Activated CD4-positive, alpha-beta memory T cell treated with anti-CD3 and anti-CD28 coated beads for 36 hours (primary cell): ENCODE measurements at regions of chr2 and their contacts with region 1.

Region 1: GRCh38 chr2:144261336-144261735 is 258.6 kb downstream of the ZEB2 start:
- DNase-seq: no peak
- H3K4me3 Mint-ChIP-seq: no peak overlapping the region
- H3K27ac Mint-ChIP-seq: no peak overlapping the region
- H3K4me1 Mint-ChIP-seq: peaks cover 32% of the 10 kb centered on the region
- H3K27me3 Mint-ChIP-seq: no peaks in the 10 kb centered on the region

Region 2: GRCh38 chr2:144166743-144167142 is 94.6 kb before region 1 on chr2:
- CTCF ChIA-PET with region 1: no interaction called
- POLR2A ChIA-PET with region 1: no interaction called
- intact Hi-C with region 1: loop called (anchors 5 kb)
- DNase-seq: no peak
- H3K4me3 Mint-ChIP-seq: no peak overlapping the region
- H3K27ac Mint-ChIP-seq: no peak overlapping the region
- H3K4me1 Mint-ChIP-seq: no peaks in the 10 kb centered on the region
- H3K27me3 Mint-ChIP-seq: no peaks in the 10 kb centered on the region

Region 3: DNA sequence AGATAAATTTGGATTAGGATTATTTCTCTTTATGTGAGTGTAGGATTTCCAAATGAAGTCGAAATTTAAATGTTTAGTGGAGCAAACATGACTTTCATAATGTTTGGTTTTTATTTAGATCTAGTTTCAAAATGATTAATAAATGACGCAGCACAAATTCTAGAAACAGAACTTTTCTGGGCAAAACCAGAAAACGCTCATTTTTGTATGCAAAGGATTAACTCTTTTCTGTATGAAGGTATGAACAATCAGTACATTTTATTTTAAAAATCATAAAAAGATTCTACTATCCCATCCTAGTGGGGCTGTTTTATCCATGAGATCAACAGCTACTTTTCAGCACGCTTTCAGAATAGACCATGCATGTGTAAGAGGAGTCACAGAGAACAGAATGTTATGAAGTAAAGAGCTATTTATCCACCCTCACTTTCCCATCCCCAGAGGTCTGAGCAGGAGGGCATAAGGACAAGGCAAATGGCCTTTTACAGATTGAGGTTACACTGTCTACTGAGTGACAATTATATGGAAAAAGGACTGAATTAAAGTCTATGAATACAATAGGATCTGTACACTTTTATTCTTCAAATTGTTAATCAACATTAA is 12.2 kb before region 1 on chr2:
- CTCF ChIA-PET with region 1: no interaction called
- POLR2A ChIA-PET with region 1: interaction called, 3 read pairs
- intact Hi-C with region 1: loop called (anchors 2 kb)
- DNase-seq: no peak
- H3K4me3 Mint-ChIP-seq: no peak overlapping the region
- H3K27ac Mint-ChIP-seq: peak overlapping the region; percentile 74
- H3K4me1 Mint-ChIP-seq: peaks cover 15% of the 10 kb centered on the region
- H3K27me3 Mint-ChIP-seq: no peaks in the 10 kb centered on the region

Region 4: GRCh38 chr2:144438801-144439631 is 177.7 kb after region 1 on chr2:
- CTCF ChIA-PET with region 1: no interaction called
- POLR2A ChIA-PET with region 1: no interaction called
- intact Hi-C with region 1: no loop called
- DNase-seq: no peak
- H3K4me3 Mint-ChIP-seq: no peak overlapping the region
- H3K27ac Mint-ChIP-seq: no peak overlapping the region
- H3K4me1 Mint-ChIP-seq: no peaks in the 10 kb centered on the region
- H3K27me3 Mint-ChIP-seq: no peaks in the 10 kb centered on the region